Aorta (tissue), 5 donors: ENCODE measurements at regions of chr17 and their contacts with region 1.

Region 1: DNA sequence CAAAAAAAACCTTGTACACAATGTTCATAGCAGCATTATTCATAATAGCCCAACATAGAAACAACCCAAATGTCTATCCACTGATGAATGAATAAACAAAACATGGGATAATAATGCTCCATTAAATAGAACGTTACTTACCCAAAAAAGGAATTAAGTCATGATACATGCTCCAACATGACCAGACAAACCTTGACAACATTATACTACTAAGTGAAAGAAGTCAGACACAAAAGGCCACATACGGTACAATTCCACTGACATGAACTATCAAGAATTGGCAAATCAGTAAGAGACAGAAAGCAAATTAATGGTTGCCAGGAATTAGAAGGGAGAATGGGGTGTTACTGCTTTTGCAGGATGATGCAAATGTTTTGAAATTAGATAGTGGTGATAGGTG is 193.8 kb upstream of the SHISA6 start:
- DNase-seq: no peak
- ATAC-seq: no peak
- H3K4me3 ChIP-seq: no peak overlapping the region
- H3K27ac ChIP-seq: no peak overlapping the region
- H3K4me1 ChIP-seq: no peaks in the 10 kb centered on the region
- H3K27me3 ChIP-seq: no peaks in the 10 kb centered on the region

Region 2: GRCh38 chr17:10992106-10992880 is 54.9 kb before region 1 on chr17:
- intact Hi-C with region 1: loop called in 1 of 2 experiments (anchors 10 kb)
- DNase-seq: no peak
- ATAC-seq: no peak
- H3K4me3 ChIP-seq: no peak overlapping the region
- H3K27ac ChIP-seq: no peak overlapping the region
- H3K4me1 ChIP-seq: no peaks in the 10 kb centered on the region
- H3K27me3 ChIP-seq: peaks cover 0 to 1% of the 10 kb centered on the region in 2 donors

Region 3: DNA sequence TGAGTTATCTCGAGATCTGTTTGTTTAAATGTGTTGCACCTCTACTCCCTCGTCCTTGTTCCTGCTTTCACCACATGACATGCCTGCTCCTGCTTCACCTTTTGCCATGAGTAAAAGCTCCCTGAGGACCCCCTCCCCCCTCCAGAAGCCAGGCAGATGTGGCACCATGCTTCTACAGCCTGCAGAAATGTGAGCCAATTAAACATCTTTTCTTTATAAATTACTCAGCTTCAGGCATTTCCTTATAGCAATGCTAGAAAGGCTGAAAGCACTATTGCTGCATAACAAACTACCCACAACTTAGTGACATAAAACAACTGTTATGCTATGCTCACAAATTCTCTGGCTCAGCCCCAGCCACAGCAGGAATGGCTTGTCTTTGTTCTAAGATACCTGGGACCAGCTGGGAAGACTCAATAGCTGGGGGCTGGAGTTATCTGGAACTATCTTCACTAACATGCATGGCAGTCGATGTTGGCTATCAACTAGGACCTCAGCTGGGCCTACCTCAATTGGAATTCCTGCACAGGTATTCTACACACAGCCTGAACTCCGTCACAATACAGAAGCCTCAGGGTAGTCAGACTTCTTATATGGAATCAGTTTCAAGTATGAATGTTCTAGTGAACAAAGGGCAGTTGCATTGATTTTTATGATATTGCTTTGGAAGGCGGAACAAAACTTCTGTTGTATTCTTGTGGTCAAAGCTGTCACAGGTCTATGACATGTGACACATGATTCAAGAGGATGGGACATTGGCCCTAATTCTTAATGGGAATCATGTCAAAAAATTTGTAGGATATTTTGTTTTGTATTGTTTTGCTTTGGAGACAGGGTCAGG is 23.4 kb before region 1 on chr17:
- intact Hi-C with region 1: no loop called
- DNase-seq: no peak
- ATAC-seq: no peak
- H3K4me3 ChIP-seq: no peak overlapping the region
- H3K27ac ChIP-seq: no peak overlapping the region
- H3K4me1 ChIP-seq: no peaks in the 10 kb centered on the region
- H3K27me3 ChIP-seq: no peaks in the 10 kb centered on the region